BJ (cell line): ENCODE measurements at regions of chr15 and their contacts with region 1.

Region 1: GRCh38 chr15:89740137-89740536 is 10.9 kb downstream of the MESP1 start:
- DNase-seq: peak; percentile 14
- H3K4me3 ChIP-seq: no peak overlapping the region
- H3K27me3 ChIP-seq: peaks cover 5% of the 10 kb centered on the region
- CTCF ChIP-seq: peak; percentile 87

Region 2: DNA sequence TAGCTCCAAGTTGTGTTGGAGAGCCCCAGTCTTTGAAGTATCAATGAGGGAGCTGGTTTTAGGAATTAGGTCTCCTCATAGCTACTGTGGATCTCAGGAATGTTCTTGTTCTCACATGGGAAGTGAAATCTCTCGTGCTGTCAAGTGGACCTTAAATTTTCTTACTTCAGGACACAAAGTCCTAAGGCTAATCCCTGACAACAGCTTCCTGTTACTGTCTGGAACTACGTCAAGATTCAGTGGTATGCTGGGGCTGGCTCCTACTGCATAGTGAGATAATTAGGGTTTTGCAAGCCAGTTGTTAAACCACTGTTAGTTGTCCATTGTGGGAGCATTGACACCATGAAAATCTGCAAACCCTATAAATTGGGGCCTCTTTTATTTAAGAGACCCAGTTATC is 11.9 kb before region 1 on chr15:
- CTCF ChIA-PET with region 1: interaction called, 24 read pairs
- POLR2A ChIA-PET with region 1: no interaction called
- DNase-seq: no peak
- H3K4me3 ChIP-seq: no peak overlapping the region
- H3K27me3 ChIP-seq: peaks cover 19% of the 10 kb centered on the region
- CTCF ChIP-seq: no peak

Region 3: DNA sequence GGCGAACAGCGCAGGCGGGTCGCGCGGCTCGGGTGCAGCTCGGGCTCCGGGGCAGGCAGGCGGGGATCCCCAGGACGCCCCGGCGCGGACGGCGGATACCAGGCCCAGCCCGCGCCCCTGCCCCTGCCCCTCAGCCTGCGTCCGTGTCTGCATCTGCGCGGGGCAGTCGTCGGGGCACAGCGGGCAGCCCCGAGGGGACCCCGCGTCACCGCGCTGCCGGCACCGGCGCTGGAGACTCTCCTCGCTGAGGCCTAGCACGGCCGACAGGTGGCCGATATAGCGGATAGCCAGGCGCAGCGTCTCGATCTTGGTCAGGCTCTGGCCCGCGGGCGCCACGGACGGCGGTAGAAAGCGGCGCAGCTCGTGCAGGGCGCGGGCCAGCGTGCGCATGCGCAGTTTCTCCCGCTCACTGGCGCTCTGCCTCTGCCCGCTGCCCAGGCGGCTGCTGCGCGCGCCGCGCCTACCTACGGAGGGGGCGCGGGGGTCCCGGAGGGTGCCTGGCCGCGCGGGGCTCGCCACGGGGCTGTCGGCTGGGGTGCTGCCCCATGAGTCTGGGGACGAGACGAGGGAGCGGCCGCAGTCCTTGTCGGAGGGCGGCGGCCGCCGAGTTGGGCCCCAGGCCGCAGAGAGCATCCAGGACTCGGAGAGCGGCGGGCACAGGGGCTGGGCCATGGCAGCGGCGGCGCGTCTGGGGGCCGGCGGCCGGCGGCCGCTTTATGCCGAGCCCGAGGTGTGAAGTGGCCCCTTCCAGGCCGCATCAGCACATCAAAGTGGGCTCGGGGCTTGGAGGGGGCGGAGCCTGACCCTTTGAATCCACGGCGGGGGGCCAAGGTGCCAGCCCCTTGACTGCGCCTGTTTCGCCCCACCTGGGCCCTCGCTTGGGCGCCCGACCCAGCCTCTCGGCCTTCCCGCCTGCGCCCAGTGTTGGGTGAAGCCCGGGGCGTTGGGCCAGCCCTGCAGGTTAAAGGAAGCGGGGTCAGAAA is 10.7 kb after region 1 on chr15 and contains the start of gene MESP1:
- CTCF ChIA-PET with region 1: interaction called, 25 read pairs
- POLR2A ChIA-PET with region 1: no interaction called
- DNase-seq: peak; percentile 35
- H3K4me3 ChIP-seq: peak within 1 kb of the TSS; percentile 54
- H3K27me3 ChIP-seq: peaks cover 2% of the 10 kb centered on the region
- CTCF ChIP-seq: peak; percentile 81
- polyA plus RNA-seq, gene MESP1: 0.20 and 0.49 TPM in 2 replicates